Left cardiac atrium (tissue), 4 donors: ENCODE measurements at regions of chr10 and their contacts with region 1.

Region 1: GRCh38 chr10:23344241-23344841 is at the start of gene C10orf67:
- DNase-seq: peak; percentile 44
- ATAC-seq: peak; percentile 56 to 79
- total RNA-seq, gene C10orf67: 0.10 to 0.27 TPM

Region 2: DNA sequence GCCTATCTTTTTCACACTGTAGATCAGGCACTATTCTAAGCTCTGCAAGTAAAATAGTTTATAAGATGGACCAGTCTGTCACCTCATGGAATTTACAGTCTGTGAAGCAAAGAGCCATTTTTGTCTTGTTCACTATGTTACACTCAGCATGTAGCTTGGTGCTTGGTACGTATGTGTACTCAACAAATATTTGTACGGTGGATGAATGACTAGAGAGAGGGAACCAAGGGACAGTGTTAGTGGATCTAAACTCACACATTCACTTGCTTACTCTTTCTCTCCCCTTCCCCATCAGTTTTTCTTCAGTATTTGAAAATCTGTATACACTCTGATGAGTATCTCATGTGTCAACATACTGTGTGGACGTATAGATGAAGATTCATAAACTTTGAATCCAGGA is 106.3 kb before region 1 on chr10:
- intact Hi-C with region 1: no loop called
- DNase-seq: no peak
- ATAC-seq: no peak

Region 3: DNA sequence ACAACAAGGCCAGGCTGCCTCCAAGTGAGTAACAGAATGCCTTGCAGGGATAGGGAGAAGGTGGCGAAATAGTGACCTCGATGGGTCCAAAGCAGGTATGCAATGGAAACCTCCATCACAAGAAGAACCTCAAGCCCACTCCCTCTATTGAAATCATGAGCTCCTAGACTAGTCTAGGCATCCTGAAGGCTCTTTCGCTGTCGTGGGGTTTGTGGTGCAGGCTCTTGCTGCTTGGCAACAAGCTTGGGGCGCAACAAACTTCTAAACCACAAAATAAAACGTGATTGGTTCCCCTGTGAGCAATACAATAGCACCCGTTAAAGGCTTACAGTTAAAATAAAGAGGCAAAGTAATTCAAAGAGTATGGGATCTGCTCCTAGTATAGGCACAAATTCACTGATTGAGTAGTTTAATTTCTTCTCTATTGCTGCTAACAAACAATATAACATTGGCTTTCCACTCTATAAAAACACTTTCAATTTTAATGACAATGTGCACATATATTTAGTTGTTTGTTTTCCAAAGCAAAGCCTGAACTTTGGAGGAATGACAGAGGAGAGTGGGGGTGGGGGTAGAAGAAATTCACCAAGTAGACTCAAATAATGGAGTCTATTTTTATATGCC is 63.8 kb before region 1 on chr10:
- intact Hi-C with region 1: no loop called
- DNase-seq: no peak
- ATAC-seq: no peak

Region 4: GRCh38 chr10:23399701-23400144 is 55.4 kb after region 1 on chr10:
- intact Hi-C with region 1: loop called in 1 of 2 experiments (anchors 2 kb)
- DNase-seq: peak; percentile 43
- ATAC-seq: peak; percentile 95

Region 5: GRCh38 chr10:23439946-23440729 is 95.8 kb after region 1 on chr10:
- intact Hi-C with region 1: loop called in 1 of 2 experiments (anchors 10 kb)
- DNase-seq: peak; percentile 46
- ATAC-seq: peak; percentile 1 to 8